ENCODE measurements at regions of chr9 and their contacts with region 1.

Region 1: GRCh38 chr9:130707225-130707976 is 13.8 kb downstream of the EXOSC2 start:
- DNase-seq: peak; percentile 68
- H3K4me3 ChIP-seq: no peak overlapping the region
- H3K27ac ChIP-seq: no peak overlapping the region
- H3K4me1 ChIP-seq: no peaks in the 10 kb centered on the region
- H3K27me3 ChIP-seq: no peaks in the 10 kb centered on the region
- CTCF ChIP-seq: peak; percentile 92

Region 2: GRCh38 chr9:129796029-129796910 is 911.1 kb before region 1 on chr9:
- CTCF ChIA-PET with region 1: no interaction called
- POLR2A ChIA-PET with region 1: no interaction called
- intact Hi-C with region 1: no loop called
- DNase-seq: no peak
- H3K4me3 ChIP-seq: no peak overlapping the region
- H3K27ac ChIP-seq: no peak overlapping the region
- H3K4me1 ChIP-seq: no peaks in the 10 kb centered on the region
- H3K27me3 ChIP-seq: peaks cover 13% of the 10 kb centered on the region
- CTCF ChIP-seq: no peak

Region 3: GRCh38 chr9:130997925-130998596 is 290.7 kb after region 1 on chr9:
- CTCF ChIA-PET with region 1: interaction called, 4 read pairs
- POLR2A ChIA-PET with region 1: no interaction called
- intact Hi-C with region 1: loop called (anchors 5 kb)
- DNase-seq: peak; percentile 72
- H3K4me3 ChIP-seq: no peak overlapping the region
- H3K27ac ChIP-seq: no peak overlapping the region
- H3K4me1 ChIP-seq: peaks cover 5% of the 10 kb centered on the region
- H3K27me3 ChIP-seq: peaks cover 7% of the 10 kb centered on the region
- CTCF ChIP-seq: peak; percentile 83

Measured in A673 (cell line).